ENCODE measurements at regions of chr12 and their contacts with region 1.

Region 1: GRCh38 chr12:110826592-110827200 is 20.1 kb upstream of the CCDC63 start:
- DNase-seq: peak; percentile 94
- ATAC-seq: peak; percentile 98
- H3K4me3 Mint-ChIP-seq: peak overlapping the region; percentile 34
- H3K27ac Mint-ChIP-seq: peak overlapping the region; percentile 17
- H3K4me1 Mint-ChIP-seq: peaks cover 7% of the 10 kb centered on the region
- H3K27me3 Mint-ChIP-seq: no peaks in the 10 kb centered on the region

Region 2: GRCh38 chr12:110449799-110450497 is 376.7 kb before region 1 on chr12 and contains the start of gene ARPC3:
- CTCF ChIA-PET with region 1: interaction called, 5 read pairs
- POLR2A ChIA-PET with region 1: no interaction called
- intact Hi-C with region 1: loop called in 1 of 2 experiments (anchors 5 kb)
- DNase-seq: peak; percentile 98
- ATAC-seq: peak; percentile 99
- H3K4me3 Mint-ChIP-seq: peak within 1 kb of the TSS; percentile 97
- H3K27ac Mint-ChIP-seq: peak within 1 kb of the TSS; percentile 100
- H3K4me1 Mint-ChIP-seq: peaks cover 38% of the 10 kb centered on the region
- H3K27me3 Mint-ChIP-seq: no peaks in the 10 kb centered on the region
- total RNA-seq, gene ARPC3: 244 to 422 TPM

Region 3: DNA sequence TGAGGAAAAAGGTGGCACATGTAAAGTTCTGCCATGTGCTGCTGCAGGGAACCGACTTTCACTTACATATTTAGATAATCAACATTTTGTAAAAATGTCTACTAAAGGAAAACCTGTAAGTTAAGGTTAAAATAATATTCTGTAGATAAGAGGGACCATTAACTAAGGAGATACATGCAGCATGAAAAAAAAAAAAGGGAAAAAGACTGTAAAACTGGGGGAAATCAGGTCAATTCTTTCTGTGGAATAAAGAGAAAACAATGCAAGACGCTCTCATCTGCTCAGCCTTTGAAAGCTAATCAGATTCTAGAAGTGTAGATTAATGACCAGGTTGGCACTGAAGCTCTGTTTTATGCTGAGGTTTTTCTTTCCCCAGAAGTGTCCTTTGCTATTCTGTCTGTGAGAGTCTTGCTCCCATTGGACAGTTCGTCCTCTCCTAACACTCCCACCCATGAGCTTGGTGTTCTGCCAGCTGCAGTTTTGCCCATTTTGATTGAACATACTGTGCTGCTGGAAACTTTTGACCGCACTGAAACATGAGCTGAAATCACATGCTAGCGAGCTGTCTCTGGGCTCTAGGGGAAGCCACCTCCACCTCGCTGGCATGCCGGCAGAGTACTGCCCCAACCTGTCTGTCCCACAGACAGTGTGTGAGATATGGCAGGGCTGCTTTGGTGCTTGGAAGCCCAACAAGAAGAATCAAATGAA is 283.3 kb before region 1 on chr12:
- CTCF ChIA-PET with region 1: no interaction called
- POLR2A ChIA-PET with region 1: no interaction called
- intact Hi-C with region 1: loop called in 1 of 2 experiments (anchors 10 kb)
- DNase-seq: peak; percentile 18
- ATAC-seq: peak; percentile 39
- H3K4me3 Mint-ChIP-seq: no peak overlapping the region
- H3K27ac Mint-ChIP-seq: peak overlapping the region; percentile 69
- H3K4me1 Mint-ChIP-seq: peaks cover 46% of the 10 kb centered on the region
- H3K27me3 Mint-ChIP-seq: no peaks in the 10 kb centered on the region

Region 4: DNA sequence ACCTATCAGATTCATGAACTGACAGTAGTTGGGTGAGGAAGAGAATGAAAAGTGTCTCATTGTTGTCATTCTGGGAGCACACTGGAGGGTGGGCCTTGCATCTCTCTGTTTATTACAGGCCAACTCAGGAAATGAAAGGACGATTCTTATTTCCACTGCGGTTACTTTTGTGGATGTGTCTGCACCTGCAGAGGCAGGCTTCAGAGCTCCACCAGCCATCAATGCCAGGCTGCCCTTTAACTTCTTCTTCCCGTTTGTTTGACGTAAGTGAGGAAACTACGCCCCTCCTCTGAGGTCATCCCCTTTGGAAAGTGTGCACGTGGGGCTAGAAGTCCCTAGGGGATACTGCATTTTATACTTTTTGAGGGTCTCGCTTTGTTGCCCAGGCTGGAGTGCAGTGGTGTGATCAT is 179.1 kb before region 1 on chr12:
- CTCF ChIA-PET with region 1: no interaction called
- POLR2A ChIA-PET with region 1: no interaction called
- intact Hi-C with region 1: no loop called
- DNase-seq: peak; percentile 33
- ATAC-seq: peak; percentile 91
- H3K4me3 Mint-ChIP-seq: no peak overlapping the region
- H3K27ac Mint-ChIP-seq: peak overlapping the region; percentile 75
- H3K4me1 Mint-ChIP-seq: peaks cover 34% of the 10 kb centered on the region
- H3K27me3 Mint-ChIP-seq: no peaks in the 10 kb centered on the region

Region 5: DNA sequence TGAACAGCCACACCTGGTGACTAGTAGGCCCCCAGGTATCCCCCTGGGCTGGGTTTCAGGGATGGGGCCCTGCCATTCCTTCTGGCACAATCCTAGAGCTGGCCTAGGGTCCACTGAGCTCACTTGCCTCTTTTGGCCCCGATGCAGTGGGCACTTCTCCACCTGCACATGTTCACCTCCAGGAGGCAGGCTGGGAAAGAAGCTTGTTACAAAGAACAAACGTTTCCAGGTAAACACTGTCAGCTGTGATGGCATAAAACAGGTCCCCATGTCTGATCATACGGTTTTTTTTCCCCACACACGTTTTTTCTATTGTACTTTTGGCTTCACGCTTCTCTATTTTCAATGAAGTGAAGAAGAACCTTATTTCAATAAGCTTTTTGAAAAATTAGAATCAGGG is 121.9 kb before region 1 on chr12:
- CTCF ChIA-PET with region 1: interaction called, 11 read pairs
- POLR2A ChIA-PET with region 1: no interaction called
- intact Hi-C with region 1: loop called (anchors 1 to 2 kb)
- DNase-seq: peak; percentile 43
- ATAC-seq: peak; percentile 39
- H3K4me3 Mint-ChIP-seq: no peak overlapping the region
- H3K27ac Mint-ChIP-seq: no peak overlapping the region
- H3K4me1 Mint-ChIP-seq: no peaks in the 10 kb centered on the region
- H3K27me3 Mint-ChIP-seq: no peaks in the 10 kb centered on the region

Region 6: DNA sequence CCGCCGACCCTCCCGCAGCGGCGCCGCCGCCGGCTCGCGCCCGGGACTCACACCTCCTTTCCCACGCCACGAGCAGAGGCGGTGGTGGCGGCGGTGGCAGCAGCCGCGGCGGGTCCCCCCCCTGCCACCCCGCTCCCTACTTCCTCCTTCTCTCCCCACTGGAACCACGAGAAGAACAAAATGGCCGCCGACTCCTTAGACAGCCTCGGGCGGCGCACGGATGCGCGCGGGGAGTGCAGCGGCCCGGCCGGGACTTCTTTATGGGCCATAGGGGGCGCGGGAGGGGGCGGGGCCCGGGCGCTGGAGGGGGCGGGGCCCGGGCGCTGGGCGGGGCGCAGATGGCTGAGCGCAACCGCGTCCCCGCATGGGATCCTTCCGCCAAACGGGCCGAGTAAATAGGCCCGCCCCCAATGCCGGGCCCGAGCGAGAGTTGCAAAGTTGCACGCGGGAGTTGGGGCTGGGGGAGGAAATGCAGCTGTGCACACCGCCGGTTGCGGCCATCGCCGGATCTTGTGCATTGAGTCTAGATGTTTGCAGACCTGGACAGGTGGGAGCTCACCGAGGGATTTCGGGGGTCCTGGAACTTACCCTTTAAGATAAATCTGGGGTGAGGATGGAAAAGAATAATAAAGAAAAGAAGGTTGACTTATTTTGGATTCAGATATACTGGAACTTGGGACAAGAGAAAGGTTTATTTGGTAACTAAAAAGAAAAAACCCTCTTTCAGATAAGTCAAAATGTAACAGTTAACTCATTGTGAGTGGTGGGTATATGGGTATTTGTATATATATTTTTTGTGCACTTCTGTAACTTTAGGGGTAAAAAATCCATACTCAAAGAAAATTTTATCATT is 83.8 kb before region 1 on chr12 and contains the start of gene PPP1CC:
- CTCF ChIA-PET with region 1: interaction called, 4 read pairs
- POLR2A ChIA-PET with region 1: interaction called, 3 read pairs
- intact Hi-C with region 1: loop called (anchors 1 to 2 kb)
- DNase-seq: peak; percentile 95
- ATAC-seq: peak; percentile 85
- H3K4me3 Mint-ChIP-seq: peak within 1 kb of the TSS; percentile 98
- H3K27ac Mint-ChIP-seq: peak within 1 kb of the TSS; percentile 99
- H3K4me1 Mint-ChIP-seq: peaks cover 34% of the 10 kb centered on the region
- H3K27me3 Mint-ChIP-seq: no peaks in the 10 kb centered on the region
- total RNA-seq, gene PPP1CC: 201 to 283 TPM